Cardiac septum (tissue), 1 donor: ENCODE measurements at regions of chr16 and their contacts with region 1.

Region 1: DNA sequence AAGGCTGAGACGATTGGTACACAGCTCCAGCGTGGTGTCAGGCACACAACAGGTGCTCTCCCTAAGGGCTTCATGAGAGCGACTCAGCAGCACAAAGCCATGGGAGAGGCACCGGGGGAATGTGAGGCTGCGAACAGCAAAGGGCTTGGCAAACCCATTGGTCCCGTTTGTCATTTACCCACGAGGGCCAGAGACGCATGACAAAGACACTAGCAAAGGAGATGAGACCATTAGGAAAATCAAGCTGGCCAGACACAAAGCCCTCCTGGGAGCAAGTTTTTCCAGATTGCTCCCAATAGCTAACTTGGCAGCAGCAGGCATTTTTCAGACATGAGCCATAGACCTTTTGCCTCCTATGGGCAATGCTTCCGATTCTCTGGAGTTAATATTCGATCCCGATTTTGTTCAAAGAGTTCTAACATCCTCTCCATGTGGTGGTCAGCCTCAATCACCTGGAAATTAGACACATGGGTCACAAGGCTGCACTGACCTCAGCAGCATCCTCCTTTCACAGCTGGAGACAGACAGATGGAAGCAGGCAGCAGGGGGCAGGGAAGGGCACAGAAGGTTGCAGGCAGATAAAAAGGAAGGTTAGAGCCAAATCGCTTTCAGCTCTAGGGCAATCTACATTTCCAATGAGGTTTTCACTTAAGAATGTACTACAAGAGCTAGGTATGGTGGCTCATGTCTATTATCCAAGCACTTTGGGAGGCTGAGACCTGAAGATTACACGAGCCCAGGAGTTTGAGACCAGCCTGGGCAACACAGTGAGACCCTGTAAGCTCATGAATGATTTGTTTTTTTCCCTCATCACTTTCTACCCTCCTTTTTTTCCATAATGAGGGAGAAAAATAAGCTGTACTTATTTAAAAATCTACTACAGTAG is 38.1 kb downstream of the TK2 start:
- DNase-seq: no peak

Region 2: GRCh38 chr16:66406534-66407221 is 105.2 kb before region 1 on chr16:
- intact Hi-C with region 1: loop called (anchors 5 kb)
- DNase-seq: peak; percentile 95